CD8-positive, alpha-beta T cell (primary cell): ENCODE measurements at regions of chr3 and their contacts with region 1.

Region 1: DNA sequence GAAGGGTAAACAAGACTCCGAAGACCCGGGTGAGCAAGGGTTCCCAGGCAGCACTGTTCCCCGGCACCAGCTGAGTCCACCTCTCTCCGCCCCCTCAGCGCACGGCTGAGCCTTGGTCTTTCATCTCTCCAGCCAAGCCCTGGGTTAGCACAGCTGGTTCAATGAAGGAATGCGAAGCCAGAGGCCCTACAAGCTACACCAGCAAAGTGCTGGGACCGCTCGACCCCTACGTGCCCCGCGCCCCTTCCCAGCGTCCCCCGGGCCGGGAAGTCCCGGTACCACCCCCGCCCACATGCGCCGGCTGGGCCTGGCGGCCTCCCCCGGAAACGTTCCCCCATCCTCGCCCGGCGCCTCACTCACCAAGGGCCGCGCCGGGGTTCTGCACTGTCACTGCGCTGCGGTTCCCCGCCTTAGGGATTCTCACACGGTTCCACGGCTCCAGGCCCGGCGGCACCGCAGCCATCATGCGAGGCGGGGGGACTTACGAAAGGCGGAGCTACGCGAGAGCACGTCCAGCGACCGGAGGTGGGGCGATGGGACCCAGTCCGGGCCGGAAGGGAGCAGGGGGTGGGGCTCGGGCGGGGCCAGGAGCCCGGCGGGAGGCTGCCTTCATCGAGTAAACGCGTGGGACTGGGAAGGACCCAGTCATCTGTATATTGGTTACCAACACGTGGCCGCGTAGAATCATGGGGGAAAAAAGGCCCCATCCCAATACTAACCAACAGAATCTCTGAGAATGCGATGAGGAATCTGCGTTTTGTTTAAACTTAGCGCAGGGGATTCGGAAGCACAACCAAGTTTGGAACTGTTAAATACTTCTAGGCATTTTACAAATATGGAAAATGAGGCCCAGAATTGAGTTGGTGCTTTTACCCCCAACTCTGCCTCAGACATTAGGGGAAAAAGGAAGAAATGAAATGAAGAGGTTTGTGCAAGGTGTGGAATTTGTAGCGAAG is 28.7 kb downstream of the GTPBP8 start:
- DNase-seq: peak; percentile 54 to 95 (median 82)
- ATAC-seq: peak; percentile 87
- H3K4me3 ChIP-seq: peak overlapping the region; percentile 57 to 87
- H3K4me3 Mint-ChIP-seq: peak overlapping the region; percentile 95
- H3K27ac ChIP-seq: peak overlapping the region; percentile 67 to 95
- H3K27ac Mint-ChIP-seq: peak overlapping the region; percentile 94
- H3K4me1 ChIP-seq: peaks cover 29% of the 10 kb centered on the region
- H3K4me1 Mint-ChIP-seq: peaks cover 64% of the 10 kb centered on the region
- H3K27me3 ChIP-seq: no peaks in the 10 kb centered on the region
- H3K27me3 Mint-ChIP-seq: no peaks in the 10 kb centered on the region
- CTCF ChIP-seq: no peak

Region 2: GRCh38 chr3:112873632-112874031 is 145.8 kb before region 1 on chr3:
- CTCF ChIA-PET with region 1: no interaction called
- POLR2A ChIA-PET with region 1: no interaction called
- intact Hi-C with region 1: no loop called
- DNase-seq: no peak
- ATAC-seq: no peak
- H3K4me3 ChIP-seq: no peak overlapping the region
- H3K4me3 Mint-ChIP-seq: no peak overlapping the region
- H3K27ac ChIP-seq: no peak overlapping the region
- H3K27ac Mint-ChIP-seq: no peak overlapping the region
- H3K4me1 ChIP-seq: no peaks in the 10 kb centered on the region
- H3K4me1 Mint-ChIP-seq: no peaks in the 10 kb centered on the region
- H3K27me3 ChIP-seq: no peaks in the 10 kb centered on the region
- H3K27me3 Mint-ChIP-seq: no peaks in the 10 kb centered on the region
- CTCF ChIP-seq: no peak

Region 3: GRCh38 chr3:113002679-113003078 is 16.8 kb before region 1 on chr3:
- CTCF ChIA-PET with region 1: interaction called, 11 read pairs
- POLR2A ChIA-PET with region 1: interaction called, 6 read pairs
- intact Hi-C with region 1: loop called in 1 of 2 experiments (anchors 1 kb)
- DNase-seq: peak in 7 of 9 experiments; percentile 24 to 68 (median 49)
- ATAC-seq: peak; percentile 47
- H3K4me3 ChIP-seq: no peak overlapping the region
- H3K4me3 Mint-ChIP-seq: no peak overlapping the region
- H3K27ac ChIP-seq: peak overlapping the region in 1 of 2 experiments; percentile 48
- H3K27ac Mint-ChIP-seq: peak overlapping the region; percentile 89
- H3K4me1 ChIP-seq: peaks cover 39% of the 10 kb centered on the region
- H3K4me1 Mint-ChIP-seq: peaks cover 71% of the 10 kb centered on the region
- H3K27me3 ChIP-seq: no peaks in the 10 kb centered on the region
- H3K27me3 Mint-ChIP-seq: no peaks in the 10 kb centered on the region
- CTCF ChIP-seq: no peak